ENCODE measurements at regions of chr12 and their contacts with region 1.

Region 1: DNA sequence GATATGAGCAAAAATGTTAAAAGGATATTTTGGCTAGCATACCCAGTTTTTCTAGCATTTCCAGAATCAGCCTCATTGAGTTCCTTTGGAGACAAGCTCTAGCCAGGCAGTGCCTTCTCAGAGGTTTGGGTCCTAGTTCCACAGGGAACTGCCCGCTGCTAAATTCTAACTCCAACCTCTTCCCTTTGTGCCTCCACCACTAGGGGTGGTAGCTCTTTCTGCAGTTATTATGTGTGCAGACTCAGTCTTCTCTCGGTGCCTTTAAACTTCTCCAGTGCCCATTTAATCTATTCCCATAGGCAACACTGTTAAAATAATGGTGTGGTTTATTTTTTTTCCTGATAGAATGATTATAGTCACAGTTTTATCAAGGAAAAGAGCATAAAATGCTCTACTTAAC is 21.5 kb upstream of the SLC25A3 start:
- DNase-seq: no peak
- H3K4me3 ChIP-seq: no peak overlapping the region
- CTCF ChIP-seq: peak; percentile 10

Region 2: DNA sequence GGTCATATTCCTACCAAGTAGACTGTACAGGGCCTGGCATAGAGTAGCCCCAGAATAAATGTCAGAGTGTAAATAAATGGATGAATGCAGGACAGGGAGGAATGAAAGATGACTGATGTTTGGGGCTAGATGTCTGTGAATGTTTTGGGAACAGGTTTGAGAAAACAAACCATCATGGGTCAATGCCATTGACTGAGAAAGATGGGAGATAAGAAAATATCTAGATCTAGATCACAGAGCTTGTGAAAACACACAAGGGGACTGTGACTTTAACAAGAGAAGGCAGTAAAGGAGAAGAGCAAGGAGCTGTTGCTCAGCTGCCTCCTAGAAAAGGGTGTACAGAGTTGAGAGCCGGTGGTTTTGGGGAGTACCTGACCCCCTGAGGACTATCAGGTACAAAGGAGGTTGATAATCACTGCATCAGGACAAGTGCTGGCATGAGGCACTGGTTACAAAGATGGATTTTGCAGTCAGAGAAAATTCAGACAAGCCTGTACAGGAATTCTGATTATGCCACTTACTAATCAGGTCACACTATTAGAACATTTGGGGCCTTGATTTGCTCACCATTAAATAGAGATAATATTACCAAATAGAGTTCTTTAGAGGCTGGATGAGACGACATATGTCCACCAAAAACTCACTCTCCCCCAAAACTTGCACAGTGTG is 507.6 kb before region 1 on chr12:
- CTCF ChIA-PET with region 1: no interaction called
- POLR2A ChIA-PET with region 1: no interaction called
- DNase-seq: no peak
- H3K4me3 ChIP-seq: no peak overlapping the region
- CTCF ChIP-seq: no peak

Region 3: GRCh38 chr12:98424726-98425401 is 147.1 kb before region 1 on chr12:
- CTCF ChIA-PET with region 1: interaction called, 11 read pairs
- POLR2A ChIA-PET with region 1: no interaction called
- DNase-seq: peak; percentile 67
- H3K4me3 ChIP-seq: no peak overlapping the region
- CTCF ChIP-seq: peak; percentile 65

Region 4: DNA sequence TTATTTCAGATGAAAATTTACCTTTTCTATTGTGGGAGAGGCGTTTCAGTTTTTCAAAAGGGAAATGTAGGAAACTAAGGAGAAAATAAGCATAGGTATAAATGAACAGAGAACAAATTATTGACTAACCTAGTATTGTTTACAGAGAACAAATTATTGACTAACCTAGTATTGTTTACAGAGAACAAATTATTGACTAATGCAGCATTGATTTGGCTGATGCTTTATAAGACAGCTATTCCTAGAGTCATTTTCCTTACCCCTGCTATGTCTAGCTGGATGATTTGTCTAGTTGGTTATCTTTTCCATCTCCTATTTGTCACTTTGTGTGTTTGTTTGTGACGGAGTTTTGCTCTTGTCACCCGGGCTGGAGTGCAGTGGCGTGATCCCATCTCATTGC is 34.0 kb before region 1 on chr12:
- CTCF ChIA-PET with region 1: interaction called, 15 read pairs
- POLR2A ChIA-PET with region 1: no interaction called
- DNase-seq: no peak
- H3K4me3 ChIP-seq: no peak overlapping the region
- CTCF ChIP-seq: no peak

Region 5: GRCh38 chr12:98550803-98551202 is 21.2 kb before region 1 on chr12:
- CTCF ChIA-PET with region 1: interaction called, 59 read pairs
- POLR2A ChIA-PET with region 1: no interaction called
- DNase-seq: no peak
- H3K4me3 ChIP-seq: no peak overlapping the region
- CTCF ChIP-seq: no peak

Region 6: DNA sequence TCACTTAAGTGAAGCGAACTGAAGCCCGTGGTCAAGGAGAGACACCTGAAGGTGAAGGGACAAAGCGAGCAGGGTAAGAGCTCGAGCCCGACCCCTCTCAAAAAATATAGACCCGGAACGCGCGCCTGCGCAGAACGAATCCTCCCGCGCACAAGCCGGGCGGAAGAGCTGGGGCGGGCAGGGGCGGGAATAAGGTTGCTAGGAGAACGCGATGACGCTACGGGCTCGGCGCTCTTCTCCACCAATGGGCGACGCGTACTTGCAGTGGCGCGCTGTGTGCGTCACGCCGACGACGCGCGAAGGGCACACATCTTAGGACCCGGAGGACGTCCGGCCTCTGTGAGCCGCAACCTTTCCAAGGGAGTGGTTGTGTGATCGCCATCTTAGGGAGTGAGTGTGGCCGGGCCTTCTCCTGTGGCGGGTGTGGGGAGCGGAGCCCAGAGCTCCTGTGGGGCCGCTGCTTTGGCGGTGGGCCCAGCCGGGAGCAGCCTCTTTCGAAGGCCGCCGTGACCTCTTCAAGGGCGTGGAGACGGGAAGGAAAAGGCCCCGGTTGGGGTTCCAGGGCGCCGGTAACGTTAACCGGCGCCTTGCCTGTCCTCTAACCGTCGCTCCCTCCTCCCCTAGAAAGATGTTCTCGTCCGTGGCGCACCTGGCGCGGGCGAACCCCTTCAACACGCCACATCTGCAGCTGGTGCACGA is 21.5 kb after region 1 on chr12 and contains the start of gene SLC25A3:
- CTCF ChIA-PET with region 1: interaction called, 43 read pairs
- POLR2A ChIA-PET with region 1: interaction called, 7 read pairs
- DNase-seq: peak; percentile 85
- H3K4me3 ChIP-seq: peak within 1 kb of the TSS; percentile 95
- CTCF ChIP-seq: no peak

Region 7: GRCh38 chr12:98653866-98654493 is 82.0 kb after region 1 on chr12:
- CTCF ChIA-PET with region 1: interaction called, 89 read pairs
- POLR2A ChIA-PET with region 1: no interaction called
- DNase-seq: no peak
- H3K4me3 ChIP-seq: no peak overlapping the region
- CTCF ChIP-seq: peak; percentile 42

Region 8: GRCh38 chr12:98973395-98973794 is 401.4 kb after region 1 on chr12:
- CTCF ChIA-PET with region 1: no interaction called
- POLR2A ChIA-PET with region 1: no interaction called
- DNase-seq: no peak
- H3K4me3 ChIP-seq: no peak overlapping the region
- CTCF ChIP-seq: no peak